CD8-positive, alpha-beta T cell (primary cell): ENCODE measurements at regions of chr10 and their contacts with region 1.

Region 1: DNA sequence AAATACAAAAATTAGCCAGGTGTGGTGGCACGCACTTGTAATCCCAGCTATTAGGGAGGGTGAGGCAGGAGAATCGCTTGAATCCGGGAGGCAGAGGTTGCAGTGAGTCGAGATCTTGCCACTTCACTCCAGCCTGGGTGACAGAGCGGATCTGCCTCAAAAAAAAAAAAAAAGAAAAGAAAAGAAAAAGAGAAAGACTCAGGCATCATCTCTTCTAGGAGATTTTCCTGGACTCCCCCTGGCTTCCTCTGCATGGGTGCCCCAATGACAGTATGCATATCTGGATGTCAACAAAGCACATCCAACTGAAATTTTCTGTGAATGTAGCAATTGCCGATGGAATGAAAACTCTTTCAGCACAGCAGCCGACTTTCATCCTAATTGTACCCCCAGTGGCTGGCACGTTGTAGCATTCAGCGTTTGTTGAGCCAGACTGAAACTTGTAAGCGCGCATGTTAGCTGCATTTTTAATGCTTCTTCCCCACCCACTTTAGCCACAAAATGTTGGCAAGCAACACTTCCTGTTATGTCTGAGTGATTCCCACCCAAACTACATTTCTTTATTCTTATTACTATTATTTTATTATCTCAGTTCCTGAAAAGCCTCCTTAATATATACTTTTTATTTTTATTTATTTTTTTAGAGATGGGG is 70.2 kb downstream of the PRTFDC1 start:
- DNase-seq: peak; percentile 29 to 86 (median 59)
- ATAC-seq: peak; percentile 84
- H3K4me3 ChIP-seq: peak overlapping the region; percentile 23 to 48
- H3K4me3 Mint-ChIP-seq: peak overlapping the region; percentile 86
- H3K27ac ChIP-seq: peak overlapping the region; percentile 44 to 46
- H3K27ac Mint-ChIP-seq: peak overlapping the region; percentile 96
- H3K4me1 ChIP-seq: peaks cover 59% of the 10 kb centered on the region
- H3K4me1 Mint-ChIP-seq: peaks cover 66% of the 10 kb centered on the region
- H3K27me3 ChIP-seq: no peaks in the 10 kb centered on the region
- H3K27me3 Mint-ChIP-seq: no peaks in the 10 kb centered on the region
- CTCF ChIP-seq: no peak

Region 2: DNA sequence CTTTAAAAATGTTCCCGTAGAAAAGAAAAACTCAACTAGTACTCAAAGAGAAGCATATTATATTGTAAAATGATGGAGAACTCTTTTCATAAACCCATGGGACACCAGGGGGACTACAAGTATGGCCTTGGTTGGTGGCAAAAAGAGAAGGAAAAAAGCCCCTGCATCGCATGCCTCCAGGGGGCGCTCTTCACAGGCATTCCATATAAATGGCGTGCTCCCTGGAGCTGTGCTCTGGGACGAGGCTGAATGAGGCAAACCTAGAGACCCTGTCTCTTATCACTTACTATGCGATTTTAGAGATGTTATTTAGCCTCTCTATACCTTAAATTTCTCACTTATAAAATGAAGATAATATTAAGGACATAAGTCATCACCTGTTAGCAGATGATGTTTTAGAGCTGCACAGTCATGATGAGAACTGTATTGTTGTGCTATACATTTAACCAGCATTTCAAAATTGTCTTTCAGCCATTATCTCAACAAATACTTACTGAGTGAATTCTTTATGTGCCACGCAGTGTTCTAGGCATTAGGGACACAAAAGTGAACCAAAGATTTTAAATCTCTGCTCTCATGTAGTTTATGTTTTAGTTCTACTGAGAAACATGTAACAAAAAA is 264.3 kb before region 1 on chr10:
- CTCF ChIA-PET with region 1: no interaction called
- POLR2A ChIA-PET with region 1: interaction called, 4 read pairs
- intact Hi-C with region 1: loop called in 1 of 2 experiments (anchors 10 kb)
- DNase-seq: peak in 7 of 9 experiments; percentile 3 to 72 (median 50)
- ATAC-seq: no peak
- H3K4me3 ChIP-seq: no peak overlapping the region
- H3K4me3 Mint-ChIP-seq: no peak overlapping the region
- H3K27ac ChIP-seq: no peak overlapping the region
- H3K27ac Mint-ChIP-seq: peak overlapping the region; percentile 58
- H3K4me1 ChIP-seq: peaks cover 9% of the 10 kb centered on the region
- H3K4me1 Mint-ChIP-seq: peaks cover 29% of the 10 kb centered on the region
- H3K27me3 ChIP-seq: no peaks in the 10 kb centered on the region
- H3K27me3 Mint-ChIP-seq: no peaks in the 10 kb centered on the region
- CTCF ChIP-seq: peak; percentile 67